OCI-LY7 (cell line): ENCODE measurements at regions of chr3 and their contacts with region 1.

Region 1: DNA sequence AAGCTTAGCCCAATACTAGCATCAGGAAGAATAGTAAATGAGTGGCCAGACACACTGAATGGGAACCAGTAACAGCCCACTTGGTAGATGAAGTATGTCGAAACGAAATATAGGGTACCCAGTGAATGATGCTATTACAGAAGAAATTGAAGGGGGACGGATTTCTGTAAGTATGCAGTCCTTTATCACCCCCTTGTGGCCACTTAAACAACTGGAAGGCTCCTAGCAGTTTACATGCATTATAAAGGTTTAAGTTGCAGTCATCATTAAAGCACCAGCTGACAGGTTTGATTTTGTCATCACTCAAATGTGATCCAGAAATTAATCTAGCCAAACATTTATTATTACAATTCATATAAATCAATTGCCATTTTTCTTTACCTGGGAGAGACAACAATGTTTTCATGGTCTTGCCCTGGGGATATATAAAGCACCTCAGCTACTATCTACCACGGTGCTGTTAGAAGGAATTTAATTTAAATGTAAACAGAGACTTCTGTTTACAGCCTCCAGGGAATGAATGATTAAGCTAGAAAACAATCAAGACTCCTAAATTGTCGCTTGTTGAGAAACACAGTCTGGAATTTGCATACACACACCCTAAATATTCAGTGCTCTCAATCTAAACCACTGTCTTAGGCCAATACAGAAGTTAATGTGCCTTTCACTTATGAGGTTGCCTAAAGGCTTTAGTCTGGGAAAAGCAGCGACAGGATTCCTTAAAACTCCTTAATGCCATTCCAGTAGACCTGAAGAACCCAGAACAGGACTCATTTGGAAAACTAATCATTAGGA is 7.8 kb downstream of the EIF1B start:
- DNase-seq: peak; percentile 80
- H3K4me3 ChIP-seq: no peak overlapping the region
- H3K27ac ChIP-seq: no peak overlapping the region
- H3K4me1 ChIP-seq: peaks cover 11% of the 10 kb centered on the region
- CTCF ChIP-seq: peak; percentile 93

Region 2: DNA sequence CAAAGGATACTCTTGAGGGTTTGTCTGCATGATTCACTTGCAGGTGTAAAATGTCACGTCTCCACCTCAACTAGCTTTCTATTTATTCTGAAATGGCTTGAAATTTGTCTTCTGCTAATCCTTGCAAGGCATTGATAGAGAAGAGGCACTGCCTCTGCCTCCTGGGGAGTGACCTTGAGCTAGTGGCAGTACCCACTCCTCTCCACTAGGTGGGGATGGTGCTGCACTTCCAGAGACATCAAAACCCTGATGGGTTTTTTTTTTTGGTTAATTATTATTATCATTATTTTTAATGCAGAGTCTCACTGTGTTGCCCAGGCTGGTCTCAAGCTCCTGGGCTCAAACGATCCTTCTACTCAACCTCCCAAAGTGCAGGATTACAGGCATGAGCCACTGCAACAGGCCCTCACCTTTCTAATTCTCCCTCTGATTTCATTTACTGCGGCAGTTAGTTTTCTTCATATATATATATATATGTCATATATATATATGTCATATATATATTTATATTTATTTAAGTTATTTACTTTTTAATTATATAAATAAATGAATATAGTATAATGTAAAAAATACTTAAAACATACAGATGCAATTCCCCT is 125.3 kb before region 1 on chr3:
- CTCF ChIA-PET with region 1: interaction called, 3 read pairs
- POLR2A ChIA-PET with region 1: interaction called, 5 read pairs
- intact Hi-C with region 1: loop called (anchors 1 kb)
- DNase-seq: peak; percentile 54
- H3K4me3 ChIP-seq: no peak overlapping the region
- H3K27ac ChIP-seq: no peak overlapping the region
- H3K4me1 ChIP-seq: no peaks in the 10 kb centered on the region
- CTCF ChIP-seq: peak; percentile 81

Region 3: DNA sequence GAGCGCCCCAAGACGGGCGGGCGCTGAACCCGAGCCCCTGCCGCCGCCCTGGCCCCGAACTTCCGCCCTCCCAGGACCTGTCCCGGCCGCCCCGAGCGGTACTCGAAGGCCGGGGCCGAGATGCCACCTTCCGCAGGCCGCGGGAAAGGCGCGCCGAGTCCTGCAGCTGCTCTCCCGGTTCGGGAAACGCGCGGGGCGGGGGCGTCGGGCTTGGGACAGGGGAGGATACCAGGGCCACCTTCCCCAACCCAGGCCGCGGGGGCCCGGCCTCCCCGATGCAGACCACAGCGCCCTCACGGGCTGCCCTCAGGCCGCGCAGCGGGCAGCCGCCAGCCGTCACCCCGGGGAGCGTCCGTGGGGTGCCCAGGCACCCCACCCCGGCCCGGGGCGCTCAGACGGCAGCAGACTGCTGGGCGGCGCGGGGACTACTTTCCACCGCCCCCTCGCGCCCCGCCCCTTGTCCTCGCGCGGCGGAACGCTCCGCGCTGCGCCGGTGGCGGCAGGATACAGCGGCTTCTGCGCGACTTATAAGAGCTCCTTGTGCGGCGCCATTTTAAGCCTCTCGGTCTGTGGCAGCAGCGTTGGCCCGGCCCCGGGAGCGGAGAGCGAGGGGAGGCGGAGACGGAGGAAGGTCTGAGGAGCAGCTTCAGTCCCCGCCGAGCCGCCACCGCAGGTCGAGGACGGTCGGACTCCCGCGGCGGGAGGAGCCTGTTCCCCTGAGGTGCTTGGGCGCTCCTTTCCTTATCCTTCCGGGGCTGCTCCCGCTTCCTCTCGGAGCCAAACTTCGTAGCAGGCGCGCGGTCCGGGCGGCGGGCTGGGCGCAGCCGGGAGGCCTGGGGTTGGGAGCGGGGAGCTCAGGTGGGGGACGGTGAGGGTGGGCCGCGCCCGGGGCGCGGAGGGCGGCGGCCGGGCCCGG is 882.0 kb after region 1 on chr3 and contains the start of gene CTNNB1:
- CTCF ChIA-PET with region 1: no interaction called
- POLR2A ChIA-PET with region 1: no interaction called
- intact Hi-C with region 1: loop called (anchors 5 kb)
- DNase-seq: peak; percentile 95
- H3K4me3 ChIP-seq: peak within 1 kb of the TSS; percentile 99
- H3K27ac ChIP-seq: peak within 1 kb of the TSS; percentile 85
- H3K4me1 ChIP-seq: peaks cover 32% of the 10 kb centered on the region
- CTCF ChIP-seq: no peak
- total RNA-seq, gene CTNNB1: 201 and 237 TPM in 2 replicates

Region 4: GRCh38 chr3:41522612-41523011 is 1205.4 kb after region 1 on chr3:
- CTCF ChIA-PET with region 1: no interaction called
- POLR2A ChIA-PET with region 1: no interaction called
- intact Hi-C with region 1: loop called (anchors 10 kb)
- DNase-seq: peak; percentile 7
- H3K4me3 ChIP-seq: no peak overlapping the region
- H3K27ac ChIP-seq: no peak overlapping the region
- H3K4me1 ChIP-seq: no peaks in the 10 kb centered on the region
- CTCF ChIP-seq: no peak